ENCODE measurements at regions of chr17 and their contacts with region 1.

Region 1: GRCh38 chr17:75182569-75183450 is at the start of gene SUMO2:
- DNase-seq: peak; percentile 99
- H3K4me3 Mint-ChIP-seq: peak within 1 kb of the TSS; percentile 92
- H3K27ac Mint-ChIP-seq: peak within 1 kb of the TSS; percentile 96
- H3K4me1 Mint-ChIP-seq: peaks cover 36% of the 10 kb centered on the region
- H3K27me3 Mint-ChIP-seq: no peaks in the 10 kb centered on the region
- total RNA-seq, gene SUMO2: 658 and 659 TPM in 2 replicates

Region 2: DNA sequence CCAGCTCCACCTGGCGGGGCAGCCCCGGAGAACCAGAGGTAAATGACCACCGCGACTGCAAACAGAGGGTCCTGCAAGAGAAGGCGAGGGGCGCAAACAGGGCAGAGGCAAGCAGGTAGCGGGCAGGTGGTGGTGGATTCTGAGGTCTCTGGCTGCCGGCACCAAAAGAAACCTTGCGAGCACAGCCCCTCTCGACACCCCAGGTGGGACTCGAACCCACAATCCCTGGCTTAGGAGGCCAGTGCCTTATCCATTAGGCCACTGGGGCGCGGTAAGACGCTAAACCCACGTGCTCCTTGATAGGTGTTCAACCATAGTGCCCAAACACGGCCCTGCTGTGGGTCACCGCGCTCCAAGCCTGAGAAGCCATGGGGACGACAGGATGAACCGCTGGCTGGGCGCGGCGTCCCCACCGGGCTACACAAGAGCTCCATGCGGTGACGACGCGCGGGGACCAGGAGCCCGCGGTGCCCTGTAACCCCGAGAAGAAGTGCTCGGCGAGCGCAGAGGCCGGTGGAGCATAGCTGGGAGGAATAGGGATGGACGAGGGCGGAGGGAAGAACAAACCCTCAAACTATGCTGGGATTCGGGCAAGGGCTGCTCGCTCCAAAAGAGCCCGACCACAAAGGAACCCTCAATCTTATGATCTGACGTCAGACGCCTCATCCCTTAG is 148.4 kb before region 1 on chr17:
- intact Hi-C with region 1: loop called (anchors 5 kb)
- DNase-seq: peak; percentile 95
- H3K4me3 Mint-ChIP-seq: peak overlapping the region; percentile 98
- H3K27ac Mint-ChIP-seq: peak overlapping the region; percentile 97
- H3K4me1 Mint-ChIP-seq: peaks cover 53% of the 10 kb centered on the region
- H3K27me3 Mint-ChIP-seq: peaks cover 6% of the 10 kb centered on the region

Region 3: GRCh38 chr17:75154195-75155106 is 28.4 kb before region 1 on chr17 and contains the start of gene JPT1:
- intact Hi-C with region 1: loop called (anchors 1 kb)
- DNase-seq: peak; percentile 99
- H3K4me3 Mint-ChIP-seq: peak within 1 kb of the TSS; percentile 98
- H3K27ac Mint-ChIP-seq: peak within 1 kb of the TSS; percentile 96
- H3K4me1 Mint-ChIP-seq: peaks cover 30% of the 10 kb centered on the region
- H3K27me3 Mint-ChIP-seq: no peaks in the 10 kb centered on the region
- total RNA-seq, gene JPT1: 271 and 292 TPM in 2 replicates

Region 4: GRCh38 chr17:75261336-75262111 is 78.7 kb after region 1 on chr17 and contains the starts of genes GGA3 and MRPS7:
- intact Hi-C with region 1: loop called (anchors 2 kb)
- DNase-seq: peak; percentile 99
- H3K4me3 Mint-ChIP-seq: peak within 1 kb of the TSS; percentile 94
- H3K27ac Mint-ChIP-seq: peak within 1 kb of the TSS; percentile 99
- H3K4me1 Mint-ChIP-seq: peaks cover 37% of the 10 kb centered on the region
- H3K27me3 Mint-ChIP-seq: no peaks in the 10 kb centered on the region
- total RNA-seq, gene GGA3: 84.2 and 86.9 TPM in 2 replicates
- total RNA-seq, gene MRPS7: 121 and 127 TPM in 2 replicates

Region 5: DNA sequence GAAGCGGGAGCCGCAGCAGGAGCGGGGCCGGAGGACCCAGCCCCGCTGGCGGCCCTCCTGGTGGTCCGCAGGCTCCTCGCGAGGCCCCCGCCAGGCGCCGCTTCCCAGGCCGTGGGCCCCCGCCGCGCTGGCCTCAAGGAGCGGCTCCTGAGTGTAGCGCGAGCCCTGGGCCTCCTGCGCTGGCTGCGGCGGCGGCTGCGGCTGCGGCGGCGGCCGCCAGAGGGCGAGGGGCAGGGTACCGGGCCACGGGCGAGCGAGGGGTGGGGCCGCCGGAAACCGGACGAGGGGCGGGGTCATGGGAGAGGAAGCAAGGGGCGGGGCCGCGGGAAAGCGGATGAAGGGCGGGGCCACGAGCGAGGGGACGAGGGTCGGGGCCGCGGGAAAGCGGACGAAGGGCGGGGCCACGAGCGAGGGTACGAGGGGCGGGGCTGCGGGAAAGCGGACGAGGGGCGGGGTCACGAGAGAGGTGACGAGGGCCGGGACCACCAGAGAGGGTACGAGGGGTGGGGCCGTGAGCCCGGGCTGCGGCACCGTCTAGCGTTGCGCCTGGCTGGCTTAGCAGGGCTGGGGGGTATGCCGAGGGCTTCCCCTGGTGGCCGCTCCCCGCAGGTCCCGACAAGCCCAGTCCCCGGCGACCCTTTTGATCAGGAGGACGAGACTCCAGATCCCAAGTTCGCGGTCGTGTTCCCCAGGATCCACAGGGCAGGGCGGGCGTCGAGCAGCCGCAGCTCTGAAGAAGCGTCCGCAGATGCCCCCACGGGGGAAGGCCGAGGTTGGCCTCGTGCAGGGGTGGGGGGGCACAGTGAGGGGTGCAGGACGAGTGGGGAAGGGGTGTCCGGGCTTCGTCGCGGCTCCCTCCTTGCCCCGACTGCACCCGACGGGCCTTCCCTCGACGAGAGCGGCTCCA is 406.5 kb after region 1 on chr17:
- intact Hi-C with region 1: loop called (anchors 5 kb)
- DNase-seq: peak; percentile 97
- H3K4me3 Mint-ChIP-seq: peak overlapping the region; percentile 80
- H3K27ac Mint-ChIP-seq: peak overlapping the region; percentile 66
- H3K4me1 Mint-ChIP-seq: peaks cover 2% of the 10 kb centered on the region
- H3K27me3 Mint-ChIP-seq: peaks cover 27% of the 10 kb centered on the region

Region 6: GRCh38 chr17:75764711-75765421 is 582.1 kb after region 1 on chr17 and contains the start of gene GALK1:
- intact Hi-C with region 1: no loop called
- DNase-seq: peak; percentile 93
- H3K4me3 Mint-ChIP-seq: peak within 1 kb of the TSS; percentile 88
- H3K27ac Mint-ChIP-seq: peak within 1 kb of the TSS; percentile 84
- H3K4me1 Mint-ChIP-seq: peaks cover 14% of the 10 kb centered on the region
- H3K27me3 Mint-ChIP-seq: no peaks in the 10 kb centered on the region
- total RNA-seq, gene GALK1: 53.3 and 54.7 TPM in 2 replicates